ENCODE measurements at regions of chr16 and their contacts with region 1.

Region 1: GRCh38 chr16:84065536-84066132 is 23.0 kb upstream of the SLC38A8 start:
- DNase-seq: peak; percentile 21
- H3K4me3 Mint-ChIP-seq: no peak overlapping the region
- H3K27ac Mint-ChIP-seq: no peak overlapping the region
- H3K4me1 Mint-ChIP-seq: no peaks in the 10 kb centered on the region
- H3K27me3 Mint-ChIP-seq: no peaks in the 10 kb centered on the region

Region 2: DNA sequence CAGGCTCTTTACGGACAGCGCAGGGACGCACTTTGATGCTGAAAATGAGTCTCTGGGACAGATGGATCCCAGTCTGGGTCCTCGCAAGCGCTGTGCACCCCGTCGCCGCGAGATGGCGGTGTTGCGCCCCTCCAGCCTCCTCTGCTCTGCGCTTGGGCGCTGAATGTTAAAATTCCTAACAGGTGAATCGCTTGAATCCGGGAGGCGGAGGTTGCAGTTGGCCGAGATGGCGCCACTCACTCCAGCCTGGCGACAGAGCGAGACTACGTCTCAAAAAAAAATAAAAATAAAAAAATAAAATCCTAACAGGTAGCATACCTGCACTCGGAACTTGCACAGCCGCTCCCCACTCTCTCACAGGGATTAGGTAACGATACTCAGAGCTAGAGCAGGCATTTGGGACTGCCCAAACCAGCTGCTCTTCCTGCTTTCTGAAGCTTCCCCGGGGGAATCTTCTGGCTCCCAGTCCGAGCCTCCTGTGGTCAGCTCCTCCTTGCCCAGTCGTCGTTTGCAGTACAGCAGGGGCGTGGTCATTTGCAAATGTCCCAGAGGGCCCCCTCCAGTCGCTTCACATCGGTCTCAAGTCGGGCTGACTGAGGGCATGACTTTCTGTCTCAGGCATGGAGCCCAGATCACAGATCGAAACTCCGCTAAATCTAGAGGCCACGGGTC is 138.8 kb before region 1 on chr16:
- intact Hi-C with region 1: loop called (anchors 1 kb)
- DNase-seq: peak; percentile 17
- H3K4me3 Mint-ChIP-seq: no peak overlapping the region
- H3K27ac Mint-ChIP-seq: no peak overlapping the region
- H3K4me1 Mint-ChIP-seq: no peaks in the 10 kb centered on the region
- H3K27me3 Mint-ChIP-seq: no peaks in the 10 kb centered on the region

Region 3: DNA sequence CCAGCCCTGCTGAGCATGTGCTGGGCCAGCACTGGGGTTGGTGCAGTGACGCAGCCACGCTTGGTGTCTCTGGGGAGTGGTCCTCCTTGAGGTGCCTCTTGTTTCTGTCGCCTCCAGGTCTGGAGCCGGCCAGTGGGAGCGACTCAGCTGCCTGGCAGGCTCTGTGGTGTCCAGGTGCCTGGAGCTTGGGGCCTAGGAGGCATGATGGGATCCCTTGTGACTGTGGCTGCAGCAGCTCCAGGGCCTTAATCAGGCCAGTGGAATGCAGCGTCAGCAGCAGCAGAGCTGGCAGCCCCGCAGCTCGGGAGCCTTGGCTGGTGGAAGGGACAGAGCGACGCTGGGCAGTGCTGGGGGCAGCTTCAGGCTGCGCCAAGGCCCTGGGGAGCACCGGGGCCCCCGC is 1121.4 kb after region 1 on chr16:
- intact Hi-C with region 1: no loop called
- DNase-seq: no peak
- H3K4me3 Mint-ChIP-seq: no peak overlapping the region
- H3K27ac Mint-ChIP-seq: no peak overlapping the region
- H3K4me1 Mint-ChIP-seq: no peaks in the 10 kb centered on the region
- H3K27me3 Mint-ChIP-seq: no peaks in the 10 kb centered on the region

Measured in activated T-helper 1 cell treated with anti-CD3 and anti-CD28 coated beads, Interleukin-12 subunit alpha, Interleukin-12 subunit beta, Interleukin-2, Interleukin-4 antibody, amounts not matched to agents 30 ng/mL and 10 ng/mL and 1 ng/mL, durations not matched to agents 14 hours and 24 hours and 36 hours (primary cell).